Lower leg skin (tissue), 4 donors: ENCODE measurements at regions of chr3 and their contacts with region 1.

Region 1: DNA sequence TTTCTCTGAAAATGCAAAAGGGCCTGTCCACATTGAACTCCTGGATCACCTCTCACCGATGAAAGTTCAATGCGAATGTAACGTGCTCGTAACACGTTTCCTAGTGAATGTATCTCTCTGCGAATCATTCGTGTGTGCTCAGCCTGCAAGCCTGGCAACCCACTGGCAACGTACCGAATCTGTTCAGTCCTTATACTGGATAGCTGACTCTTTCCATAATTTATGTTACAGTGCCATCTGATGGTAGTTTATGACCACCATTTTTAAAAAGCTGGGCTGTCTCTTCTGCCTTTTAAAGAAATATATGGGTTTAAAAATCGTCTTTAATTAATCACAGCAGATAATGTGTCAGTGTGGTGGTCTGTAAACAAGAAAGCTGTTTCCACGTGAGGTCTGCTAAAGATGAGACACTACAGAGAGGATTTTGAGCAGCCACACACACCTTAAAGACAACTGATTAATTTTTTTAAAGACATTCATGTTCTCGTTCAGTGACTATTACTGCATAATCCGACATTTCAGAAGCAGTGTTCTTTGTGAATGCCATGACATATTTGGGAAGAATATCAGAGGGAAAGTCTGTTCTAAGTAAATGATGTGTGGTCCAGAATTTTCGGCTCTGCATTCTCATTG is 69.4 kb upstream of the FOXP1 start:
- DNase-seq: peak in 1 of 2 donors; percentile 26
- H3K4me3 ChIP-seq: no peak overlapping the region
- CTCF ChIP-seq: no peak
- POLR2A ChIP-seq: no peak

Region 2: GRCh38 chr3:70539908-70540307 is 1113.0 kb before region 1 on chr3:
- intact Hi-C with region 1: loop called (anchors 10 kb)
- DNase-seq: no peak
- H3K4me3 ChIP-seq: no peak overlapping the region
- CTCF ChIP-seq: no peak
- POLR2A ChIP-seq: no peak

Region 3: GRCh38 chr3:71069797-71070196 is 583.1 kb before region 1 on chr3:
- intact Hi-C with region 1: loop called (anchors 10 kb)
- DNase-seq: peak; percentile 85 to 93
- H3K4me3 ChIP-seq: no peak overlapping the region
- CTCF ChIP-seq: peak in 1 of 3 donors; percentile 15
- POLR2A ChIP-seq: no peak

Region 4: GRCh38 chr3:71702131-71703024 is 49.5 kb after region 1 on chr3:
- intact Hi-C with region 1: no loop called
- DNase-seq: no peak
- H3K4me3 ChIP-seq: no peak overlapping the region
- CTCF ChIP-seq: no peak
- POLR2A ChIP-seq: no peak

Region 5: GRCh38 chr3:71955240-71956068 is 302.6 kb after region 1 on chr3:
- intact Hi-C with region 1: no loop called
- DNase-seq: peak; percentile 63 to 89
- H3K4me3 ChIP-seq: no peak overlapping the region
- CTCF ChIP-seq: no peak
- POLR2A ChIP-seq: no peak